ENCODE measurements at regions of chr11 and their contacts with region 1.

Region 1: DNA sequence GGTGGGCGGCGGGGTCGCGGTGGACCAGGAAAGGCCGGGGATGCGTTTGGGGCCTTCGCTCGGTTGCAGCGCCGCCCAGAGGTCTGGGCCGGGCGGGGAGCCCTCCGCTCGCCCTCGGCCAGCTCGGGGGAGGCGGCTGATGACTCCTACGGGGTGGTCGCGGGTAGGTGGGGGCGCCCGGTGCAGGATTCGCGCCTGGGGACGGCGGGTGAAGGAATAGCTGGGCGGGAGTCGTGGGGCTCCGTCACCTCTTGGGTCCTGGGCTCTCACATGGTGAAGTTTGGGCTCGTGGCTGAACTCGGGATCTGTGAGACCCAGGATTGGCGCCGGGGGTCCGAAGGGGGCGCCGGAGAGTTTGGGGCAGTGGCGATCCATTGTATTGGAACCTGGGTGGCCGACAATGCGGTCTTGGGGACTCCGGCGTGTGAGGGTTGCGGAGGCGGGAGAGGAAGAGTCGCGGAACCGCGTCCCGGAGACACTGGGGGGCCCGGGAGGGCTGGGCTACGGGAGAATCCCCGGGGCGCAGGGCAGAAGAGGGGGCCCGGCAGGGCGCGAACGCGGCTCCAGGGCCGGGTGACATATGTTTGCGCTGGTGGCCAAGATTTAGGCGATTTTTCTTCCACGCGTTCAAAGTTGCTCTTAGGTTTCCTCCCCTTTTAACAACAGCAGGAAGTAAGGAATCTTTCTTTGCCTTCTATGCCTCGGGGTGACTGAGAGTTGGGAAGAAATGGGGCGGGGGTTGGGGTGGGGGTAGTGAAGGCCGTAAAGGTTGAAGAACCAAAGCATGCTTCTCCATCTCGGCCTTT is 935 bp downstream of the QSER1 start:
- DNase-seq: peak; percentile 65
- ATAC-seq: peak; percentile 51
- H3K4me3 Mint-ChIP-seq: peak overlapping the region; percentile 94
- H3K27ac Mint-ChIP-seq: peak overlapping the region; percentile 82
- H3K4me1 Mint-ChIP-seq: peaks cover 30% of the 10 kb centered on the region
- H3K27me3 Mint-ChIP-seq: no peaks in the 10 kb centered on the region
- CTCF ChIP-seq: no peak

Region 2: GRCh38 chr11:32549611-32550187 is 343.8 kb before region 1 on chr11:
- CTCF ChIA-PET with region 1: no interaction called
- POLR2A ChIA-PET with region 1: no interaction called
- intact Hi-C with region 1: no loop called
- DNase-seq: no peak
- ATAC-seq: no peak
- H3K4me3 Mint-ChIP-seq: no peak overlapping the region
- H3K27ac Mint-ChIP-seq: no peak overlapping the region
- H3K4me1 Mint-ChIP-seq: no peaks in the 10 kb centered on the region
- H3K27me3 Mint-ChIP-seq: peaks cover 15% of the 10 kb centered on the region
- CTCF ChIP-seq: no peak

Region 3: GRCh38 chr11:32829680-32830412 is 63.7 kb before region 1 on chr11 and contains the start of gene PRRG4:
- CTCF ChIA-PET with region 1: no interaction called
- POLR2A ChIA-PET with region 1: interaction called, 3 read pairs
- intact Hi-C with region 1: loop called (anchors 2 kb)
- DNase-seq: peak; percentile 36
- ATAC-seq: peak; percentile 78
- H3K4me3 Mint-ChIP-seq: peak within 1 kb of the TSS; percentile 90
- H3K27ac Mint-ChIP-seq: peak within 1 kb of the TSS; percentile 59
- H3K4me1 Mint-ChIP-seq: peaks cover 12% of the 10 kb centered on the region
- H3K27me3 Mint-ChIP-seq: peaks cover 13% of the 10 kb centered on the region
- CTCF ChIP-seq: no peak
- total RNA-seq, gene PRRG4: 0.17 and 0.33 TPM in 2 replicates

Region 4: DNA sequence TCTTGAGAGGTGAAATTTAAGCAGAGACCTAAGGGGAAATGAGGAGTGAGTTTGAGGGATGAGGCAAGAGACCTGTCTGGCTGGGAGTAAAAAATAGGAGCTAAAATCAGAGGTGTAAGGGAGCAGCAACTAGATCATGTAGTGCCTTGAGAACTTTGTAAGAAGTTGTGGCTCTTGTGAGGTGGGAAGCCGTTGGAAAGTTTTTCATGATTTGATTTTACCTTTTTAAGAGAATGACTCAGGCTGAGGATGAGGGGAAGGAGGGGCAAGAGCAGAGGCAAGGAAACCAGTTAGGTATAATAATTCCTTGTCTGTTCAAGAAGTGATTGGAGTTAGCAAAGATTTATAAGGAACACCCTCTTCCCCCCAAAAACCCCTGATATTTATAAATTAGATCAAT is 24.9 kb after region 1 on chr11:
- CTCF ChIA-PET with region 1: no interaction called
- POLR2A ChIA-PET with region 1: no interaction called
- intact Hi-C with region 1: no loop called
- DNase-seq: no peak
- ATAC-seq: no peak
- H3K4me3 Mint-ChIP-seq: no peak overlapping the region
- H3K27ac Mint-ChIP-seq: no peak overlapping the region
- H3K4me1 Mint-ChIP-seq: peaks cover 9% of the 10 kb centered on the region
- H3K27me3 Mint-ChIP-seq: no peaks in the 10 kb centered on the region
- CTCF ChIP-seq: no peak